ENCODE measurements at regions of chr20 and their contacts with region 1.

Region 1: DNA sequence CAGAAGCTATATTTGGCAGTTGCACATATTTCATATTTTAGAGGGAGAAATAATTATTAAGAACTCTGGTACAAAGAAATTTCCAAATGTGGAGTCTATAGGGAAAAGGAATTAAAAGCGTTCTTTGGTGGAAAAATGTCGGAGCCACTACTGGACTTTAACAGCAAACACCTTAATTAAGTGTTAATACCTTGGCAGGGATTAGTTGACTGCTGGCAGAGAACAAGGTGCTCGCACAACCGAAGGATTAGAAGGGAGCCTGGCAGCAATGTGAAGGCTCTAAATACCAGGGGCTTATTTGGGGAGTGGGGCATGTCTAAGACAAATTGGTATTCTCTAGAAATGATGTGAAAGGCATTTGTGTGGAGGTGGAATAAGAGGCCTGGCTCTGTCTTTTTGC is 98.9 kb downstream of the PAK5 start:
- DNase-seq: no peak

Region 2: GRCh38 chr20:10342152-10342551 is 602.2 kb after region 1 on chr20:
- intact Hi-C with region 1: loop called in 1 of 2 experiments (anchors 5 kb)
- DNase-seq: no peak

Measured in posterior vena cava (tissue), 2 donors.